ENCODE measurements at regions of chr3 and their contacts with region 1.

Region 1: GRCh38 chr3:49906004-49906743 is 2.5 kb upstream of the MST1R start:
- DNase-seq: peak; percentile 38
- ATAC-seq: peak; percentile 30
- H3K4me3 Mint-ChIP-seq: peak overlapping the region; percentile 55
- H3K27ac Mint-ChIP-seq: peak overlapping the region; percentile 56
- H3K4me1 Mint-ChIP-seq: peaks cover 30% of the 10 kb centered on the region
- H3K27me3 Mint-ChIP-seq: no peaks in the 10 kb centered on the region
- CTCF ChIP-seq: no peak

Region 2: GRCh38 chr3:49539659-49540560 is 366.3 kb before region 1 on chr3:
- CTCF ChIA-PET with region 1: interaction called, 3 read pairs
- POLR2A ChIA-PET with region 1: no interaction called
- intact Hi-C with region 1: loop called (anchors 1 kb)
- DNase-seq: peak; percentile 93
- ATAC-seq: peak; percentile 92
- H3K4me3 Mint-ChIP-seq: peak overlapping the region; percentile 79
- H3K27ac Mint-ChIP-seq: peak overlapping the region; percentile 46
- H3K4me1 Mint-ChIP-seq: peaks cover 9% of the 10 kb centered on the region
- H3K27me3 Mint-ChIP-seq: peaks cover 11% of the 10 kb centered on the region
- CTCF ChIP-seq: no peak

Region 3: GRCh38 chr3:49703443-49703927 is 202.7 kb before region 1 on chr3:
- CTCF ChIA-PET with region 1: interaction called, 5 read pairs
- POLR2A ChIA-PET with region 1: no interaction called
- intact Hi-C with region 1: loop called (anchors 1 kb)
- DNase-seq: peak; percentile 54
- ATAC-seq: peak; percentile 100
- H3K4me3 Mint-ChIP-seq: no peak overlapping the region
- H3K27ac Mint-ChIP-seq: peak overlapping the region; percentile 41
- H3K4me1 Mint-ChIP-seq: peaks cover 4% of the 10 kb centered on the region
- H3K27me3 Mint-ChIP-seq: no peaks in the 10 kb centered on the region
- CTCF ChIP-seq: no peak

Region 4: GRCh38 chr3:49786241-49786958 is 119.8 kb before region 1 on chr3 and contains the start of gene IP6K1:
- CTCF ChIA-PET with region 1: no interaction called
- POLR2A ChIA-PET with region 1: no interaction called
- intact Hi-C with region 1: loop called (anchors 5 kb)
- DNase-seq: peak; percentile 97
- ATAC-seq: peak; percentile 99
- H3K4me3 Mint-ChIP-seq: peak within 1 kb of the TSS; percentile 91
- H3K27ac Mint-ChIP-seq: peak within 1 kb of the TSS; percentile 93
- H3K4me1 Mint-ChIP-seq: peaks cover 32% of the 10 kb centered on the region
- H3K27me3 Mint-ChIP-seq: no peaks in the 10 kb centered on the region
- CTCF ChIP-seq: no peak
- total RNA-seq, gene IP6K1: 44.3 and 47.6 TPM in 2 replicates

Region 5: GRCh38 chr3:49839193-49839809 is 66.9 kb before region 1 on chr3:
- CTCF ChIA-PET with region 1: interaction called, 8 read pairs
- POLR2A ChIA-PET with region 1: no interaction called
- intact Hi-C with region 1: loop called (anchors 1 kb)
- DNase-seq: peak; percentile 65
- ATAC-seq: peak; percentile 97
- H3K4me3 Mint-ChIP-seq: no peak overlapping the region
- H3K27ac Mint-ChIP-seq: peak overlapping the region; percentile 24
- H3K4me1 Mint-ChIP-seq: peaks cover 5% of the 10 kb centered on the region
- H3K27me3 Mint-ChIP-seq: no peaks in the 10 kb centered on the region
- CTCF ChIP-seq: peak; percentile 17

Region 6: GRCh38 chr3:49856181-49857005 is 49.8 kb before region 1 on chr3 and contains the start of gene TRAIP:
- CTCF ChIA-PET with region 1: no interaction called
- POLR2A ChIA-PET with region 1: no interaction called
- intact Hi-C with region 1: loop called (anchors 2 kb)
- DNase-seq: peak; percentile 94
- ATAC-seq: peak; percentile 100
- H3K4me3 Mint-ChIP-seq: peak within 1 kb of the TSS; percentile 86
- H3K27ac Mint-ChIP-seq: peak within 1 kb of the TSS; percentile 80
- H3K4me1 Mint-ChIP-seq: peaks cover 15% of the 10 kb centered on the region
- H3K27me3 Mint-ChIP-seq: peaks cover 3% of the 10 kb centered on the region
- CTCF ChIP-seq: no peak
- total RNA-seq, gene TRAIP: 6.4 TPM in 2 replicates

Region 7: DNA sequence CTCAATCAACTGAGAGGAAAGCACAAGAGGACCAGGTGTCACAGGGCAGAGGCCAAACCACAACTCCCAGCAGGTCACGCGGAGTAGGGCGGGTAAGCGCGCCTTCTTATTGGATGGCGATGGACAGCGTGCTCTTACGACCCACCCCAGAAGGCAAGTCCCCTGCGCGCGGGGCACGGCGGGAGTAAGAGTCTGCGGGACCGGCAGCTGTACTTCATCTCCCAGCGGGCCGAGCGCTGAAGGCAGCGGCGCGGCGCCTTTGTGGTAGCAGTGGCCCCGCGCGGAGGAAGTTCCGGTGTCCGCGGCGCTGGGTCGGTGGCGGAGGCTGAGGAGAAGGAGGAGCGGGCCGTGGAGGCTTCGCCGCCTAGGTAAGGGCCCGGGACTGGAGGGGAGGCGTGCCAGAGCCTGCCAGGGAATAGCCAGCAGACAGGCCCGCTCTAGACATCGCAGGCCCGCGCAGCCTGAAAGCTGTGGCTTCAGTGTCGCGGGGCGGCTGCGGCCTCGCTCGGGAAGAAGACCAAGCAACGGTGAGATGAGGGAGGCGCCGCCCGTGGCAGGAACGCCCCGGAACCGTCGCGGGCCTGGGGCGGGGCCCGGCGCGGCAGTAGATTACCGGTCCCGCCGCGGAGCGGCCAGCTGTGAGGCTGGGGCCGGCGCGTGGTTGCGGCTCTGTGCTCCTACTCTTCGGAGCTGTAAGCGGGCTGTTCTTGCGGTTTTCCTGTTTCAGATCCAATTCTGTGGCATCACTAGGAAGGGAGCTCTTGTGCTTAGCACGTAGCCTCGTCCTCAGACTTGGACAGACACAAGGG is 33.9 kb after region 1 on chr3 and contains the start of gene RBM6:
- CTCF ChIA-PET with region 1: no interaction called
- POLR2A ChIA-PET with region 1: interaction called, 3 read pairs
- intact Hi-C with region 1: loop called (anchors 2 kb)
- DNase-seq: peak; percentile 89
- ATAC-seq: peak; percentile 93
- H3K4me3 Mint-ChIP-seq: peak within 1 kb of the TSS; percentile 98
- H3K27ac Mint-ChIP-seq: peak within 1 kb of the TSS; percentile 97
- H3K4me1 Mint-ChIP-seq: peaks cover 43% of the 10 kb centered on the region
- H3K27me3 Mint-ChIP-seq: no peaks in the 10 kb centered on the region
- CTCF ChIP-seq: no peak
- total RNA-seq, gene RBM6: 160 and 172 TPM in 2 replicates